Caco-2 (cell line): ENCODE measurements at regions of chr4 and their contacts with region 1.

Region 1: GRCh38 chr4:67327262-67328017 is 217.9 kb downstream of the CENPC start:
- DNase-seq: peak; percentile 51 to 65
- H3K4me3 ChIP-seq: no peak overlapping the region
- H3K4me3 Mint-ChIP-seq: no peak overlapping the region
- H3K27ac Mint-ChIP-seq: no peak overlapping the region
- H3K4me1 ChIP-seq: no peaks in the 10 kb centered on the region
- H3K4me1 Mint-ChIP-seq: no peaks in the 10 kb centered on the region
- H3K27me3 ChIP-seq: no peaks in the 10 kb centered on the region
- H3K27me3 Mint-ChIP-seq: no peaks in the 10 kb centered on the region
- CTCF ChIP-seq: peak; percentile 69 to 80

Region 2: GRCh38 chr4:66777097-66777496 is 550.3 kb before region 1 on chr4:
- CTCF ChIA-PET with region 1: no interaction called
- POLR2A ChIA-PET with region 1: no interaction called
- intact Hi-C with region 1: loop called (anchors 1 kb)
- DNase-seq: no peak
- H3K4me3 ChIP-seq: no peak overlapping the region
- H3K4me3 Mint-ChIP-seq: no peak overlapping the region
- H3K27ac Mint-ChIP-seq: no peak overlapping the region
- H3K4me1 ChIP-seq: no peaks in the 10 kb centered on the region
- H3K4me1 Mint-ChIP-seq: no peaks in the 10 kb centered on the region
- H3K27me3 ChIP-seq: no peaks in the 10 kb centered on the region
- H3K27me3 Mint-ChIP-seq: no peaks in the 10 kb centered on the region
- CTCF ChIP-seq: no peak

Region 3: DNA sequence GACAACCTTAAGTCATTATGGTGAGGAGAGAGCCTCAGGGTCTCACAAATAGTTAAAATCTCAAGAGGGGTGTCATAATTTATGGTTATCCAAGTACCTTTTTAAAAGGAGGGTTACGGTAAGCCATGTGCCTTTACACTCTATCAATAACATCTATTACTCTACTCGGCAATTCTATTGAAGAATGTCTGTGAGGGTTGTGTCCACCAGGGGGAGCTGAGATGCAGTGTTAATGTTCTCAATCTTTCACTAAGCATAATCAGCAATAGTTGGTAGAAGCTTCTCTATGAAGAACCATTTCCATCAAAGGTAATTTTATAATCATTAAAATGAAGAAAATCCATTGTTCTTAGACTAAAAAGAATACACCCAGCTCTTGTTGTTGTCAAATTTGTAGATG is 239.5 kb before region 1 on chr4:
- CTCF ChIA-PET with region 1: interaction called, 5 read pairs
- POLR2A ChIA-PET with region 1: no interaction called
- intact Hi-C with region 1: loop called (anchors 1 kb)
- DNase-seq: peak in 1 of 2 experiments; percentile 55
- H3K4me3 ChIP-seq: no peak overlapping the region
- H3K4me3 Mint-ChIP-seq: no peak overlapping the region
- H3K27ac Mint-ChIP-seq: no peak overlapping the region
- H3K4me1 ChIP-seq: no peaks in the 10 kb centered on the region
- H3K4me1 Mint-ChIP-seq: no peaks in the 10 kb centered on the region
- H3K27me3 ChIP-seq: no peaks in the 10 kb centered on the region
- H3K27me3 Mint-ChIP-seq: no peaks in the 10 kb centered on the region
- CTCF ChIP-seq: peak in 1 of 2 experiments; percentile 52

Region 4: GRCh38 chr4:67122029-67122428 is 205.4 kb before region 1 on chr4:
- CTCF ChIA-PET with region 1: no interaction called
- POLR2A ChIA-PET with region 1: no interaction called
- intact Hi-C with region 1: loop called (anchors 1 kb)
- DNase-seq: peak in 1 of 2 experiments; percentile 41
- H3K4me3 ChIP-seq: no peak overlapping the region
- H3K4me3 Mint-ChIP-seq: no peak overlapping the region
- H3K27ac Mint-ChIP-seq: no peak overlapping the region
- H3K4me1 ChIP-seq: no peaks in the 10 kb centered on the region
- H3K4me1 Mint-ChIP-seq: no peaks in the 10 kb centered on the region
- H3K27me3 ChIP-seq: no peaks in the 10 kb centered on the region
- H3K27me3 Mint-ChIP-seq: no peaks in the 10 kb centered on the region
- CTCF ChIP-seq: peak; percentile 49 to 66

Region 5: DNA sequence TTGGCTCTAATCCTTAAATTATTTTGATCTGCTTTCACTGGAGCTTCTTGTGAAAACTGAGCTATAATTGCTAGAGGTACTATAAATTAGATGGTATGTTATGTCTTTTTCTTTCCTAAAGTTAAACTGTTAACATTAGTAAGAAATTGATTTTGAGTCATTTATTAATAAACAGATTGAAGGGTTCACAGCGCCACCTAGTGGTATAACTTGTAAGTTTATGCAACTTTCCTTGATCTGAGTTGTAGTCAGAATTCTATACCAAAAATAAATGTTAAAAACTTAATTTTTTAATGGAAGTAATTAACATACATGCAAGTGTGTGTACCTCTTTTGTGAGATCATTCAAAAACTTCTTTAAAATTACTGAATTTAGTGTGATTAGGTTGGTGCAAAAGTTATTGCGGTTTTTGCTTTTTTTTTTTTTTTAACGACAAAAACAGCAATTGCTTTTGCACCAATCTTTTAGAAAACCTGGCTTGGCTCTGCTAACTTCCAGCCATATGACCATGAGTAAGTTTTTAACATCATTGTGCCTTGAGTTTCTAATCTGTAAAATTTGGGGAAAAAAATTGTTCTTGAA is 66.3 kb after region 1 on chr4:
- CTCF ChIA-PET with region 1: no interaction called
- POLR2A ChIA-PET with region 1: no interaction called
- intact Hi-C with region 1: loop called (anchors 5 kb)
- DNase-seq: peak in 1 of 2 experiments; percentile 27
- H3K4me3 ChIP-seq: no peak overlapping the region
- H3K4me3 Mint-ChIP-seq: no peak overlapping the region
- H3K27ac Mint-ChIP-seq: no peak overlapping the region
- H3K4me1 ChIP-seq: peaks cover 6% of the 10 kb centered on the region; the same call in 1 of the 2 replicates
- H3K4me1 Mint-ChIP-seq: peaks cover 8% of the 10 kb centered on the region
- H3K27me3 ChIP-seq: no peaks in the 10 kb centered on the region
- H3K27me3 Mint-ChIP-seq: no peaks in the 10 kb centered on the region
- CTCF ChIP-seq: peak; percentile 46 to 63